Testis (tissue), 5 donors: ENCODE measurements at regions of chr3 and their contacts with region 1.

Region 1: GRCh38 chr3:49021813-49022687 is at the start of gene NDUFAF3:
- DNase-seq: peak; percentile 92
- H3K4me3 ChIP-seq: peak within 1 kb of the TSS; percentile 93 to 94
- H3K27ac ChIP-seq: peak within 1 kb of the TSS; percentile 99
- H3K4me1 ChIP-seq: peaks cover 34% of the 10 kb centered on the region
- H3K27me3 ChIP-seq: no peaks in the 10 kb centered on the region
- CTCF ChIP-seq: peak; percentile 95 to 98 (median 96)
- POLR2A ChIP-seq: no peak
- total RNA-seq, gene NDUFAF3: 324 to 416 TPM

Region 2: GRCh38 chr3:48492543-48493501 is 529.2 kb before region 1 on chr3:
- intact Hi-C with region 1: no loop called
- DNase-seq: no peak
- H3K4me3 ChIP-seq: peak overlapping the region in 1 of 2 donors; percentile 10
- H3K27ac ChIP-seq: no peak overlapping the region
- H3K4me1 ChIP-seq: no peaks in the 10 kb centered on the region
- H3K27me3 ChIP-seq: no peaks in the 10 kb centered on the region
- CTCF ChIP-seq: no peak
- POLR2A ChIP-seq: no peak

Region 3: GRCh38 chr3:49093853-49094767 is 72.1 kb after region 1 on chr3 and contains the start of gene QRICH1:
- intact Hi-C with region 1: loop called (anchors 10 kb)
- DNase-seq: peak; percentile 97
- H3K4me3 ChIP-seq: peak within 1 kb of the TSS; percentile 99 to 100
- H3K27ac ChIP-seq: peak within 1 kb of the TSS; percentile 98
- H3K4me1 ChIP-seq: peaks cover 24% of the 10 kb centered on the region
- H3K27me3 ChIP-seq: no peaks in the 10 kb centered on the region
- CTCF ChIP-seq: peak in 2 of 3 experiments; percentile 49 to 50
- POLR2A ChIP-seq: peak; percentile 36
- total RNA-seq, gene QRICH1: 280 to 287 TPM

Region 4: GRCh38 chr3:49158108-49158709 is 136.2 kb after region 1 on chr3:
- intact Hi-C with region 1: no loop called
- DNase-seq: peak; percentile 47
- H3K4me3 ChIP-seq: no peak overlapping the region
- H3K27ac ChIP-seq: no peak overlapping the region
- H3K4me1 ChIP-seq: no peaks in the 10 kb centered on the region
- H3K27me3 ChIP-seq: no peaks in the 10 kb centered on the region
- CTCF ChIP-seq: no peak
- POLR2A ChIP-seq: no peak

Region 5: DNA sequence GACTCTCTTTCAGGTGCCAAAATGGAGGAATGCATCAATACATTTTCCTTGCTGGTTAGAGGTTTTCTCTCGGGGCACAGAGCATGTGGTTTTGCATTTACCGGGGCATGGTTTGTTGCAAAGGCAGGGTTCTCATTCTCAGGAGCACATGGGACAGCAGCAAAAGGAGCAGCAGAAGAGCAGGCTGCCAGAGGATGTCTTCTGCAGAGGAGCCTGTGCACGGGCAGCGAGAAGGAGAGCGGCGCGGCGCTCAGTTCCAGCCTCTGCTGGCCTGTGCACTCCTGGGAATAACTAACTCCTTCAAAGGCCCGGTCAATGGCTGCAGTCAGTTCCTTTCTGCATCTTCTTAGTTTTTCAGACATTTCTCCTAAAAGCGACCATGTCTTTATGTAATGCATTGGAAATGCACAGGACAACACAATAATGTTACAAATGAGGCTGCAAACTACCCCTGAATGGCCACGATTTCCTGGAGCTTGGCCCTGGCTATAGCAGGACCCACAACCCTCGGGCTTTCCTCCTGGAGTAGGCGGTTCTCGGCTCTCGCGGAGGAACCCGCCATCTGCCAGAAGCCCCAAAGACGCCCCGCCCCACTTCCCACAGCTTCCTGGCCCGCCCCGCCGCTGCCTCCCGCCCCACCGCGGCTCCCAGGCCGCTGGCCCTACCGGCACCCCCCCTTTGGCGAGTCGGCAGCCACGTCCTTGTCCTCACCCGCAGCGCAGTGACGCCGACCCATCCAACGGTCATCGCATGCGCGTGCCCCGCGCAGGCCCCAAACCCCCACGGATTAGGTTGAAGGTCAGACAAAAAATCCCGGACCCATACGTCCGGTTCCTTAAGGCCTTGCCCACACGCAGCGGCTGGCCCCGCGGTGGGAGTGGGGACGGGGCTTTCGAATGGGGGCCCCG is 254.7 kb after region 1 on chr3 and contains the start of gene C3orf62:
- intact Hi-C with region 1: loop called (anchors 10 kb)
- DNase-seq: peak; percentile 92
- H3K4me3 ChIP-seq: peak within 1 kb of the TSS; percentile 50 to 66
- H3K27ac ChIP-seq: peak within 1 kb of the TSS; percentile 94 to 98
- H3K4me1 ChIP-seq: peaks cover 35% of the 10 kb centered on the region
- H3K27me3 ChIP-seq: no peaks in the 10 kb centered on the region
- CTCF ChIP-seq: no peak
- POLR2A ChIP-seq: no peak
- total RNA-seq, gene C3orf62: 14.1 to 25.9 TPM